GM18951 (cell line): ENCODE measurements at regions of chr5 and their contacts with region 1.

Region 1: DNA sequence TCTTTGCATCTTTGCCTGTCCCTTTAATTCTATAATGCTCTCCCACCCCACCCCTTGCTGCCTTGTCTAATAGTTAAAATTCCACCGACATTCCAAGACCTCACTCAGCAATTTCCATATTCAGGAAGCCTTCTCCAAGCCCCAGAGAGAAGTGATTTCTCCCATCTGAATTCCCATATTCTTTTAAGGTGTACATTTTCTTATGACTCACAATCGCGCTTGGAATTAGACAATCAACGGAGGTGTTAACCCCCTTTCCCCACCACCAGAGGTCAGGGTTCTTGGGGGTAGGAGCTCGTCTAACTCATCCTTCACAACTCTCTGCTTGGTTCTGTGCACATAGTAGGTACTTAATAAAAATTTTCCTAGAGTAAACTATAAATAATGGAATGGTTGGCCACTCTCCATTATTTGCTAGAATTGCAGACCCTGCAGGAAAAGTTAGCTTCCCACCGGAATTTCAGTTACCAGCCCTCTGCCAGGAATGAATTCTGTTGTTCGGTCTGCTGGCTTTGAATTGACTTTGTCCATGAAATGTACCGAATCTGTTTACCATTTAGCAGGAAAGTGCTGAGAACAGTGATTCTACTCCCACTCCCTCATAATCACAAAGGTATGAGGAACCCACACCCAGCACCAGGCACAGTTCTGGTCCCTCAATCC is 5.0 kb downstream of the KCNIP1 start:
- POLR2A ChIP-seq: no peak

Region 2: DNA sequence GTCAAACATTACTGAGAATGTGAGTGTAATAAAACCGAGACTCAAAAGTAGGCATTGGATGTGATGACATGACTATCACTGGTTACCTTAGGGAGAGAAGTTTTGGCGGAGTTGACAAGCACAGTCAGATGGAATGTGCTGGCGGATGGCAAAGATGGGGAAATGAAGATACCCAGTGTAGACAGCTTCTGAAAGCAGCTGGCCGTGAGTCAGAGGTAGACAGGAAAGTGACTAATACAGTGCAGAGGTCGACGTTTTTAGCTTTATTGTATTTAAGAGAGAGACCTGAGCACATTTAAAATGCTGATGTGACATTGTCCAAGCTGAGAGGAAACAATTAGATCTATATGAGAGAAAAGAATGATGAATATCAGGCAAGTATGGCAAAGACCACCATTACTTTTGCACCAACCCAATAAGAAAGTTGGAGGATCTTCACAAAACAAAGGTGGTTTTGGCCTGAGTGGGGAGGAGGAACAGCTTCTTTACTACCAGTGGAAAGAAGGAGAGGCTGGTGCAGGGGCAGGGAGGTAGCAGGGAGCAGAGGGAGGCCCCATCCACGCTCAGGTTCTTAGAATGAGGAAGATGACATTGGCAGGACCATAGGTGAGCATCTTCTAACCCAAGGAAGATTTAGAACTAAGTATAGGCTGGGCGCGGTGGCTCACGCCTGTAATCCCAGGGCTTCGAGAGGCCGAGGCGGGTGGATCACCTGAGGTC is 41.6 kb before region 1 on chr5:
- in situ Hi-C with region 1: loop called (anchors 5 kb)
- POLR2A ChIP-seq: no peak

Region 3: GRCh38 chr5:170633235-170634081 is 124.7 kb after region 1 on chr5:
- in situ Hi-C with region 1: no loop called
- POLR2A ChIP-seq: no peak